Ascending aorta (tissue), 2 donors: ENCODE measurements at regions of chr15 and their contacts with region 1.

Region 1: DNA sequence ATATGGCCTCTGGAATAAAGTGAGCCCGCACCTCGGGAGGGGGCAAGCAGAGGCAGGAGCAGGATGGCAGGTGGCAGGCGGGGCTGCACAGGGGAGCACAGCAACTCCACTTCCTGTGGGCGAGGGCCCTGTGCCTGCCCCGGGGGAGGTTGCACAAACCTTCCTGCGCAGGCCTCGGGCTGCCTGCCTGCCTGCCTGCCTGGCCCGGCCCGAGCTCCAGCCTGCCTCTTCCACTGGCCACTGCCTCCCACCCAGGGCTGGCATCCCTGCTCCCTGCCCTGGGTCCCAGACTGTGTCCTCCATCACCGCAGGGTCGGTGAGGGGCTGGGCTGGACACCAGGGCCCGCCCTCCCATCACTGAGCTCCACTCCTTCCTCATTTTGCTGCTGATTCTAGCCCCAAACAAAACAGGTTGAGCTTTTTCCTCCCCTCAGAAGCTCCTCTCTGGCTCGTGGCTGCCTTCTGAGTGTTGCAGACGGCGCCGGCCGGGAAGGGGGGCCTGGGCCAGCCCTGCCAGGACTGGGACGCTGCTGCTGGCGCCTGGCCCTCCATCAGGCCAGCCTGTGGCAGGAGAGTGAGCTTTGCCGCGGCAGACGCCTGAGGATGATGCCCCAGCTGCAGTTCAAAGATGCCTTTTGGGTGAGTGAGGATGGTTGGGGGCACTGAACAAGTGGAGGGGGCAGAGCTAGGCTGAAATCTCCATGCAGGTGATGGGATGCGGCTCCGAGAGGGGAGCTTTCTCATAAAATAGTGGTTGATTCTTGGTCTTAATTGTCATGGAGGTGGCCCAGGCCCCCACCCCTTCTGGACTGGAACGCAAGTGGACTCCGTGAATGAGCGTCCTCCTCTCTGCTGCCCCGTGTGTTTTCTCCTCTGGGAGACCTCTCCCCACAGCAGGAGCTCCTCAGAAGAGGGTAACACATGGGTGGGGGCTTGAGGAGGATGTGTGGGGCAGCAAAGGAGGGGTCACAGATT is at the start of gene PSTPIP1:
- DNase-seq: peak in 1 of 2 donors; percentile 87
- H3K4me3 ChIP-seq: peak within 1 kb of the TSS; percentile 29 to 56
- H3K27ac ChIP-seq: peak within 1 kb of the TSS; percentile 94 to 97
- H3K4me1 ChIP-seq: peaks cover 25 to 33% of the 10 kb centered on the region in 2 donors
- H3K27me3 ChIP-seq: no peaks in the 10 kb centered on the region
- CTCF ChIP-seq: no peak
- total RNA-seq, gene PSTPIP1: 14.6 TPM

Region 2: DNA sequence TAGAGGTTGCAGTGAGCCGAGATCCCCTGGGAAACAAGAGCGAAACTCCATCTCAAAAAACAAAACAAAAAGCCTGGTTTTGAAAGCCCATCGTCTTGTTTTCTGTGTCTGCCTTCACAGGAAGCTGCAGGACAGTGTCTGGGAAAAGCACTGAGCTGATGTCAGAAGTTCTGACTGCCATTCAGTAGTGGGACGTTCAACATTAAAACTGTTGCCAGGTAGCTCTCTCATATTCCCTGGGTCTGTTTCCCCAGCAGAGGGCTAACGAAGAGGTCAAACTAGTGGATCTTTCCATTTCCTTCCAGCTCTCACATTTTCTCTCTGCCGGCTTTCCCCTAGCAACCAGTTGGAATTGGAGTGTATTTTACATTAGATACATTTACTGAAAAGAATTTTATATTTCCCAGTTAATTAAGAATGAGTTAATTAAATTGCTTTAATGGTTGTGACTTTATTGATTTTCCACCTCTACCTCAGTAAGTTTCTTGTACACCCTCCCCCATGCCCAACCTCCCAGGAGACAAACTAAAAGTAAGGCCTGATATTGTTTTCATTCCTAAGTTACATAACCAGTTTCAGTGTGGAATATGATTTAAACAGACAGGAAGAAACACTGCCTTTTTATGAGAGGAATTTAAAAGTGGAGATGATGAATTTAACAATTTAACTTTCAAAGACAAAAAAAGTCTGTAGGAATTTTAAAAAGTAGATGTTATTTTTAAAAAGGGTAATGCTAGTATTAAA is 33.8 kb before region 1 on chr15:
- intact Hi-C with region 1: no loop called
- DNase-seq: no peak
- H3K4me3 ChIP-seq: no peak overlapping the region
- H3K27ac ChIP-seq: peak overlapping the region; percentile 8 to 36
- H3K4me1 ChIP-seq: peaks cover 7 to 40% of the 10 kb centered on the region in 2 donors
- H3K27me3 ChIP-seq: no peaks in the 10 kb centered on the region
- CTCF ChIP-seq: no peak

Region 3: DNA sequence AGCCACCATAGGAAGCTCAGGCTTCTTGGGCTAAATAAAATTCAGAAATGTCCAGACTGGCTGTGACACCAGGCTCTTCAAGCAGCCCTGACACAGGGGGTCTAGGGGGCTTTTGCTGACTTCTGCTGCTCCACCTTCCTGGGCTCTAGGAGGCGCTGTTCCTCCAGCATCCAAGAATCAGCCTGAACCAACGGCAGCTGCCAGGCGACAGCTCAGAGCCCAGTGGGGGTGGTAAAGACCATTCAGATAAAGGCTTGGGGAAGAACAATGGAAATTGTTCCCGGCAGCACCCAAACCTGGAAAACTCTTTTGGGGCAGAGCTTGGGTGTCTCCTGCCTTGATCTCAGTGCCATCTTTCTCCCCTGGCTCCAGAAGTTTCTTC is 21.9 kb before region 1 on chr15:
- intact Hi-C with region 1: loop called (anchors 2 kb)
- DNase-seq: no peak
- H3K4me3 ChIP-seq: peak overlapping the region; percentile 42 to 49
- H3K27ac ChIP-seq: peak overlapping the region; percentile 85 to 86
- H3K4me1 ChIP-seq: peaks cover 4 to 14% of the 10 kb centered on the region in 2 donors
- H3K27me3 ChIP-seq: no peaks in the 10 kb centered on the region
- CTCF ChIP-seq: peak; percentile 65 to 80 (median 78)

Region 4: GRCh38 chr15:77179541-77179998 is 184.3 kb after region 1 on chr15:
- intact Hi-C with region 1: no loop called
- DNase-seq: no peak
- H3K4me3 ChIP-seq: no peak overlapping the region
- H3K27ac ChIP-seq: no peak overlapping the region
- H3K4me1 ChIP-seq: no peaks in the 10 kb centered on the region
- H3K27me3 ChIP-seq: no peaks in the 10 kb centered on the region
- CTCF ChIP-seq: no peak